ENCODE measurements at regions of chr1 and their contacts with region 1.

Region 1: GRCh38 chr1:153990468-153991150 is at the start of gene RPS27:
- DNase-seq: peak; percentile 98
- ATAC-seq: peak; percentile 51
- H3K4me3 ChIP-seq: peak within 1 kb of the TSS; percentile 89 to 96
- H3K27ac ChIP-seq: peak within 1 kb of the TSS; percentile 80
- H3K4me1 ChIP-seq: peaks cover 7 to 37% of the 10 kb centered on the region in 2 experiments
- H3K27me3 ChIP-seq: no peaks in the 10 kb centered on the region
- CTCF ChIP-seq: no peak
- POLR2A ChIP-seq: peak; percentile 99
- RAD21 ChIP-seq: no peak
- total RNA-seq, gene RPS27: 1,905 TPM

Region 2: GRCh38 chr1:153532769-153533599 is 457.6 kb before region 1 on chr1:
- CTCF ChIA-PET with region 1: no interaction called
- POLR2A ChIA-PET with region 1: interaction called, 6 read pairs
- RAD21 ChIA-PET with region 1: no interaction called
- intact Hi-C with region 1: loop called (anchors 5 kb)
- DNase-seq: peak; percentile 81
- ATAC-seq: peak; percentile 48
- H3K4me3 ChIP-seq: peak overlapping the region; percentile 74 to 89
- H3K27ac ChIP-seq: peak overlapping the region; percentile 94
- H3K4me1 ChIP-seq: peaks cover 46 to 60% of the 10 kb centered on the region in 2 experiments
- H3K27me3 ChIP-seq: no peaks in the 10 kb centered on the region
- CTCF ChIP-seq: peak in 2 of 3 experiments; percentile 93 to 96; a peak in 4 of 6 replicates
- POLR2A ChIP-seq: no peak
- RAD21 ChIP-seq: no peak

Region 3: DNA sequence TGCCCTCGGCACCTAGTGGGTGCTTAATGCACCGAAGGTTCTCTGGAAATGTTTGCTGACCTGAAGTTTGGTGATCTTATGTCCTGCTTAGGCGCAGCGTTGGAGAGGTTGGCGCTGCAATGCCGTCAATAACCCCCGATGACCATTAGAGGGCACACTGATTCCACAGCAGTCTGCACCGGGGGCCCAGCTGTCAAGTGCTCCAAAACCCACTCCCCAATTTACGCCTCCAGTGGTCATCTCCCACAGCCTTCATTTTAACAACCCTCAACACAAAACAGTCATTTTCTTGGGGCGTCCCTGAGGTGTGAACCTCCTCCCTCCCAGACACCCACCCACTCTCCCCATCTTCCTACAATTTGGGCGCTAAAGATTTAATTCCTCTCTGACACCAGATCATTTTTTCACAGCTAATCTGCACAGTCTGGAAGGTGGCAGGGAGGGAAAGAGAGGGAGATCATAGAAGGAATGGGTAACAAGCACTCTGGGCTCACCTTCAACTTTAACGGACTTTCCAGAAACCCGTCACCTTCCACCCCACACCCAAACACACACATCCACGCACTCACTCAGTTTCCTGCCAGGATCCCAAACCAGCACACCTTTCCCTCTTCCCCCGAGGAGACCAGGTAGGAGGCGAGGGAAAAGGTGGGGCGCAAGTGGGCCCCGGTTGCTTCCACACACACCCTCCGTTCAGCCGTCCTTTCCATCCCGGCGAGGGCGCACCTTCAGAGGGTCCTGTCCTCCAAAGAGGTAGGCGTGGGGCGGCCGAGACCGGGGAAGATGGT is 312.7 kb before region 1 on chr1:
- CTCF ChIA-PET with region 1: no interaction called
- POLR2A ChIA-PET with region 1: no interaction called
- RAD21 ChIA-PET with region 1: no interaction called
- intact Hi-C with region 1: loop called (anchors 1 kb)
- DNase-seq: peak; percentile 22
- ATAC-seq: peak; percentile 86
- H3K4me3 ChIP-seq: no peak overlapping the region
- H3K27ac ChIP-seq: no peak overlapping the region
- H3K4me1 ChIP-seq: peaks cover 0 to 4% of the 10 kb centered on the region in 2 experiments; a peak in 2 of 4 replicates
- H3K27me3 ChIP-seq: no peaks in the 10 kb centered on the region
- CTCF ChIP-seq: peak; percentile 89 to 98 (median 93)
- POLR2A ChIP-seq: no peak
- RAD21 ChIP-seq: peak; percentile 96

Region 4: GRCh38 chr1:153816283-153816889 is 174.2 kb before region 1 on chr1:
- CTCF ChIA-PET with region 1: interaction called, 7 read pairs
- POLR2A ChIA-PET with region 1: interaction called, 4 read pairs
- RAD21 ChIA-PET with region 1: no interaction called
- intact Hi-C with region 1: loop called (anchors 1 kb)
- DNase-seq: no peak
- ATAC-seq: no peak
- H3K4me3 ChIP-seq: no peak overlapping the region
- H3K27ac ChIP-seq: no peak overlapping the region
- H3K4me1 ChIP-seq: no peaks in the 10 kb centered on the region
- H3K27me3 ChIP-seq: no peaks in the 10 kb centered on the region
- CTCF ChIP-seq: no peak
- POLR2A ChIP-seq: no peak
- RAD21 ChIP-seq: no peak

Region 5: DNA sequence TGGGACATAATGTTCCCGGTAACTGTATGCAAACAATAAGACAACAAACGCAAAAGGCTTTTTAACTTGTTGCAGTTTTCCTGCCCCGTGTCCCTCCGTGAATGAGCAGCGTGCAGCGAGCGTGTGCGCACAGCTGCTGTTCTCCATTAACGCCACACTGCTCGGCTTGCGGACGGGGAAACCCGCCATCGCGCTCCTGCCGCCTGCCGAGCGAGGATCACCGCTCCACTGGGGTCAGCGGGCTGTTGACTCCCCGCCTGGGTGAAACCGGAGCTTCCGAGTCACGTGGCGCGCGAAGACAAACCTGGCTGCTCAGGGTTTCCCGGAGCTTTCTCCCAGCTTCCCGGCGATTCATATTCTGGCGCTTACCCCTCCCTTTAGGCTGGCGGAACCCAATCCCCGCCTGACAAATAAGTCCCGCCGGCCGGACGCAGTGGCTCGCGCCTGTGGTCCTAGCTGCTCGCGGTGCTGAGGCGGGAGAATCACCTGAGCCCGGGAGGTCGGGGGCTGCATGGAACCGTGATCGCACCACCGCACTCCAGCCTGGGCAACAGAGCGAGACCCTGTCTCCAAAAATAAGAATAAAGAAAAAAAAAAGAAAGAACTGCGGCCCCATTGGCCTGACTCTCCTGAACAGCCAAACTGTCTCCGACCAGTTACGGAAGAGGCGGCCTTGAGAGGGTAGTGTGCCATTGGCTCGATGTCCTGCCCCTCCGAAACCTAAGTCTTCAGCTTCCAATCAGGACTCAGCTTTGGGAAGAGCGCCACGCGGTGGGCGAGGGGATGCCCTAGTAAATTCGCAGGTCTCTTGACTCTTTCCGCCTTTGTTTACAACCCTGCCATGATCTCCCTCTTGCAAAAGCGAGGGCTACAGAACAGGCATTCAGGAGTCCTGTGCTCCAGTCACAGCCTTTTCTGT is 23.3 kb before region 1 on chr1 and contains the start of gene CREB3L4:
- CTCF ChIA-PET with region 1: interaction called, 13 read pairs
- POLR2A ChIA-PET with region 1: interaction called, 24 read pairs
- RAD21 ChIA-PET with region 1: no interaction called
- intact Hi-C with region 1: no loop called
- DNase-seq: peak; percentile 98
- ATAC-seq: peak; percentile 75
- H3K4me3 ChIP-seq: peak within 1 kb of the TSS; percentile 68 to 79
- H3K27ac ChIP-seq: peak within 1 kb of the TSS; percentile 90
- H3K4me1 ChIP-seq: peaks cover 21 to 50% of the 10 kb centered on the region in 2 experiments
- H3K27me3 ChIP-seq: no peaks in the 10 kb centered on the region
- CTCF ChIP-seq: peak in 2 of 3 experiments; percentile 26 to 32; a peak in 3 of 6 replicates
- POLR2A ChIP-seq: peak; percentile 91
- RAD21 ChIP-seq: no peak
- total RNA-seq, gene CREB3L4: 15.3 TPM

Region 6: GRCh38 chr1:154104433-154105082 is 113.9 kb after region 1 on chr1:
- CTCF ChIA-PET with region 1: interaction called, 5 read pairs
- POLR2A ChIA-PET with region 1: interaction called, 10 read pairs
- RAD21 ChIA-PET with region 1: no interaction called
- intact Hi-C with region 1: no loop called
- DNase-seq: no peak
- ATAC-seq: peak; percentile 96
- H3K4me3 ChIP-seq: no peak overlapping the region
- H3K27ac ChIP-seq: no peak overlapping the region
- H3K4me1 ChIP-seq: 0 out of 4 replicates have a peak, but pooled peaks cover 0 to 5% of the 10 kb centered on the region in 2 experiments
- H3K27me3 ChIP-seq: no peaks in the 10 kb centered on the region
- CTCF ChIP-seq: peak; percentile 37 to 40 (median 39); a peak in 5 of 6 replicates
- POLR2A ChIP-seq: no peak
- RAD21 ChIP-seq: 0 out of 2 replicates have a peak, but pooled peaks have one; percentile 24

Measured in HCT116 (cell line).